PC-9 (cell line): ENCODE measurements at regions of chr2 and their contacts with region 1.

Region 1: GRCh38 chr2:55862673-55863390 is 60.8 kb downstream of the EFEMP1 start:
- DNase-seq: peak; percentile 65 to 99
- H3K4me3 ChIP-seq: no peak overlapping the region
- H3K27ac ChIP-seq: peak overlapping the region; percentile 80
- H3K4me1 ChIP-seq: peaks cover 32% of the 10 kb centered on the region
- H3K27me3 ChIP-seq: no peaks in the 10 kb centered on the region
- CTCF ChIP-seq: no peak

Region 2: DNA sequence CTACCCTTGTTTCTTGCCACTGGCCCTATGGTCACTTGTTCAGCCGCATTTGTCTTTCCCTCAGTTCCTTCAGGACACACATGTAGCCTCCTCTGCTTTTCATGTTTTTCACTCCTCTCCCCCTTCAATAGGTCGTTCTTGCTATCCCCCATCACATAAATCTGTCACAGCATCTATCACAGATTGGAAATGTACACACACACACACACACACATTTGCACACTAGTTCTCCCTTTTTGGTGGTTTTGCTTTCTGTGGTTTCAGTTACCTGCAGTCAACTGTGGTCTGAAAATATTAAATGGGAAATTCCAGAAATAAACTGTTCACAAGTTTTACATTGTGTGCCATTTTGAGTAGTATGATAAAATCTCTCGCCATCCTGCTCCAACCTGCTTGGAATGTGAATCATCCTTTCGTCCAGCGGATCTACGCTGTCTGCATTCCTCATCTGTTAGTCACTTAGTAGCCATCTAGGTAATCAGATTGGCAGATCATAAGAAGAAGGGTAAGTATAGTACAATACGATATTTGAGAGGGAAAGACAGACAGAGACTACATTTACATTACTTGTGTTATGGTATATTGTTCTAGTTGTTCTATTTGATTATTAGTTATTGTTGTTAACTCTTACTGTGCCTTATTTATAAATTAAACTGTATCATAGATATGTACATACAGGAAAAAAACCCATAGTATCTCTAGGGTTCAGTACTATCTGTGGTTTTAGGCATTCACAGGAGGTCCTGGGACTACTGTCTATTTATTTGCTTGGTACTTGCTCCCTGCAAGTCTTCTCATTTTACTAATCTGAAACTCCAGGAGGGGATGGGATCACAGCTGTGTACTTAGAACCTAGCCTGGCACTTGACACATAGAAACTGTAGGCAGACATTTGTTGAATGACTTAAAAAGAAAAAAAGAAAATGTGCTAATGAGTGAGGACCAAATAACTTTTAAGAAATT is 83.1 kb before region 1 on chr2:
- CTCF ChIA-PET with region 1: no interaction called
- POLR2A ChIA-PET with region 1: no interaction called
- intact Hi-C with region 1: loop called (anchors 2 kb)
- DNase-seq: peak; percentile 60 to 87
- H3K4me3 ChIP-seq: no peak overlapping the region
- H3K27ac ChIP-seq: 0 out of 2 replicates have a peak overlapping the region, but pooled peaks have one; percentile 9
- H3K4me1 ChIP-seq: peaks cover 15% of the 10 kb centered on the region
- H3K27me3 ChIP-seq: no peaks in the 10 kb centered on the region
- CTCF ChIP-seq: no peak

Region 3: DNA sequence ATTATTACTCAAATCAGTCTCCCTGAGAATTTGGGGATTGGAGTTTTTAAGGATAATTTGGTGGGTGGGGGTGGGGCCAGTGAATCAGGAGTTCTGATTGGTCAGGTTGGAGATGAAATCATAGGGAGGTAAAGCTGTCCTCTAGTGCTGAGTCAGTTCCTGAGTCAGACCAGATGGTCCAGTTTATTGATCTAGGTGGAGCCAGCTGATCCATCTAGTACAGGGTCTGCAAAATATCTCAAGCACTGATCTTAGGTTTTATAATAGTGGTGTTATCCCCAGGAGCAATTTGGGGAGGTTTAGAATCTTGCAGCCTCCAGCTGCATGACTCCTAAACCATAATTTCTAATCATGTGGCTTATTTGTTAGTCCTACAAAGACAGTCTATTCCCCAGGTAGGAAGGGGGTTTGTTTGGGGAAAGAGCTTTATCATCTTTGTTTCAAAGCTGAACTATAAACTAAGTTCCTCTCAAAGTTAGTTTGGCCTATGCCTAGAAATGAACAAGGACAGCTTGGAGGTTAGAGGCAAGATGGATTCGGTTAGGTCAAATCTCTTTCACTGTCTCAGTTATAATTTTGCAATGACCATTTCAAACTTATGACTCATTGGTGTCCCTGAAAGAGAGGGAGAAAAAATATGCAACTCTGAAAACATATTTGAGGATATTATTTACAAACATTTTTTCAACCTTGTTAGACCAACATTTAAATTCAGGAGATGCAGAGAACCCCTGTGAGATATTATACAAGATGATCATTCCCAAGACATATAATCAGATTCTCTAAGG is 35.2 kb before region 1 on chr2:
- CTCF ChIA-PET with region 1: no interaction called
- POLR2A ChIA-PET with region 1: no interaction called
- intact Hi-C with region 1: no loop called
- DNase-seq: peak in 1 of 2 experiments; percentile 73
- H3K4me3 ChIP-seq: no peak overlapping the region
- H3K27ac ChIP-seq: peak overlapping the region; percentile 37
- H3K4me1 ChIP-seq: peaks cover 21% of the 10 kb centered on the region
- H3K27me3 ChIP-seq: no peaks in the 10 kb centered on the region
- CTCF ChIP-seq: no peak

Region 4: GRCh38 chr2:55843096-55843993 is 19.5 kb before region 1 on chr2:
- CTCF ChIA-PET with region 1: no interaction called
- POLR2A ChIA-PET with region 1: no interaction called
- intact Hi-C with region 1: loop called (anchors 1 kb)
- DNase-seq: peak; percentile 39 to 96
- H3K4me3 ChIP-seq: 0 out of 2 replicates have a peak overlapping the region, but pooled peaks have one; percentile 6
- H3K27ac ChIP-seq: peak overlapping the region; percentile 70
- H3K4me1 ChIP-seq: peaks cover 67% of the 10 kb centered on the region
- H3K27me3 ChIP-seq: no peaks in the 10 kb centered on the region
- CTCF ChIP-seq: no peak

Region 5: DNA sequence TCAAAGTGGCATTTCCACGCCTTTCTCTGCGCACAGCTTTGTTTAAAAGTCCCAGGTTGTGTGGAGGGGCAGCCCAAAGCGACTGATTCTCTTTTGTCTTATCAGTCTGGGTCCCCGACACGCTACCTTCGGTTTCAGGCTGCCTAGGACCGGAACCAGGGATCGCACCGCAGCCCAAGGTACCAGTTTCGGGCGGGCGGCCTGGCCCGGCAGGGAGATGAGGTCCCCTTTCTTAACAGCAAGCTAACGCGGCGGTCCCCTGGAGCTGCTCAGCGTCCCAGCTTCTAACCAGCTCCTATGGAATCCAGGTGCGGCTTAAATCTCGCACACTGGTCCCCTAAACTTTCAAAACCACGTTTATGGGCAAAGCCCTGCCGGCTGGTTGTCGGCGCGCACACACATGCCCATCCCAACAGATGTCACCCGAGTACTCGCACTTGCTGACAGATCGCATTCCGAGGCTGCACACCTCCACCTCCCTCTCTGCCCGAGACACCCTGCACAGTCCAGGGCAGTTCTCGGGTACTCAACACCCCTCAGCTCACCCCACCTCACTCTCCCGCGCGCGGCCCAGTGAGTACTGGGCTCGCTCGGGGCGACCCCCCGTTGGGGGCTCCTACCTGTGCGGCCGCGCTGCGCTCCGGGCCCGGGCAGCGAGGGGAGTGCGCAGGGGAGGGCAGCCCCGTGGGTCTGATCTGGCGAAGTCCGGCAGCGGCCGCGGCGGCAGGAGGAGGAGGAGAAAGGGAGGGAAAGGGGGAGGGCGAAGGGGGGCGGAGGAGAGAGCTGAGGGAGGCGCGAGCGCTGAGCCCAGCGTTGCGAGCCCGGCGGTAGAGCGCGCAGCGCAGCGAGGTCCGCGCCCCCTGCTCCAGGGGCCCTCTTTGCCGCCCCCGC is 60.5 kb after region 1 on chr2 and contains the start of gene EFEMP1:
- CTCF ChIA-PET with region 1: no interaction called
- POLR2A ChIA-PET with region 1: no interaction called
- intact Hi-C with region 1: loop called (anchors 5 kb)
- DNase-seq: peak; percentile 56 to 80
- H3K4me3 ChIP-seq: peak within 1 kb of the TSS; percentile 62
- H3K27ac ChIP-seq: no peak within 1 kb of the TSS
- H3K4me1 ChIP-seq: peaks cover 6% of the 10 kb centered on the region; the same call in 1 of the 2 replicates
- H3K27me3 ChIP-seq: peaks cover 22% of the 10 kb centered on the region; the same call in 1 of the 2 replicates
- CTCF ChIP-seq: no peak
- total RNA-seq, gene EFEMP1: 61.3 and 86.3 TPM in 2 replicates

Region 6: DNA sequence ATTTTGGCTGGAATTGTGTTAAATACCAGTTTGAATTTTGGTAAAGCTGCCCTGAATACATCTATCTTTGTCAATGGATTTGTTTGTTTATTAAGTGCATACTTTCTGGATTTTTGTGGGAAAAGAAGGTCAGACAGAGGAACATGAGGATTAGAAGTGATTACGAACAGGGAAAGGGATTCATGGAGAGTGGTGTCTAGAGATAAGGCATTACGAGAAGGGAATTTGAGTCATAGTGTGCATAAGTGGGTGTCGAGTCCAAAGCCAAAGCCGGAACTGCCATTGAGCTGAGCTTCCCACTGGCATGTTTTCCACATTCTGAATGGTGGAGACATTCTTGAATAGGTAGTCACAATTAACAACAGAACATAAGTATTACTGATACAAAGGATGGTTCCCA is 129.6 kb after region 1 on chr2:
- CTCF ChIA-PET with region 1: no interaction called
- POLR2A ChIA-PET with region 1: no interaction called
- intact Hi-C with region 1: loop called (anchors 1 kb)
- DNase-seq: peak; percentile 63 to 77
- H3K4me3 ChIP-seq: no peak overlapping the region
- H3K27ac ChIP-seq: no peak overlapping the region
- H3K4me1 ChIP-seq: peaks cover 8% of the 10 kb centered on the region; the same call in 1 of the 2 replicates
- H3K27me3 ChIP-seq: no peaks in the 10 kb centered on the region
- CTCF ChIP-seq: no peak